OCI-LY7 (cell line): ENCODE measurements at regions of chr5 and their contacts with region 1.

Region 1: GRCh38 chr5:92353107-92354030 is 970.3 kb upstream of the ARRDC3 start:
- DNase-seq: no peak
- H3K4me3 ChIP-seq: no peak overlapping the region
- H3K27ac ChIP-seq: no peak overlapping the region
- H3K4me1 ChIP-seq: no peaks in the 10 kb centered on the region
- CTCF ChIP-seq: no peak

Region 2: DNA sequence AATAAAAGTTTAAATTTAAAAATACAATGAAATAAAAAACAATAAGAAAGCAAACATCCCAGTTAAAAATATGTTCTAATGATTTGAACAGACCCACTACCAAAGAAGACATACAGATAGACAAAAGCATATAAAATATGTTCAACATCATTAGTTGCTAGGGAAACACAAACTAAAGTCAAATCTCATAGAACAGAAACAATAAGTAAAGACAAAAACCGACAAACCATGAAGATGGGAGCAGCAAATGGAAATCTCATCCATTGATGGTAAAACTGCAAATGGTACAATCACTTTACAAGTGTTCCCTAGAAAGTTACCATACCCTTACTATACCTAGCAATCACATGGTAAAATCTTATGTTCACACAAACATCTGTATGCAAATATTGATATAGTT is 539.8 kb before region 1 on chr5:
- CTCF ChIA-PET with region 1: no interaction called
- POLR2A ChIA-PET with region 1: no interaction called
- intact Hi-C with region 1: no loop called
- DNase-seq: no peak
- H3K4me3 ChIP-seq: no peak overlapping the region
- H3K27ac ChIP-seq: no peak overlapping the region
- H3K4me1 ChIP-seq: no peaks in the 10 kb centered on the region
- CTCF ChIP-seq: no peak

Region 3: GRCh38 chr5:92838253-92838652 is 484.9 kb after region 1 on chr5:
- CTCF ChIA-PET with region 1: no interaction called
- POLR2A ChIA-PET with region 1: no interaction called
- intact Hi-C with region 1: loop called (anchors 5 kb)
- DNase-seq: no peak
- H3K4me3 ChIP-seq: no peak overlapping the region
- H3K27ac ChIP-seq: no peak overlapping the region
- H3K4me1 ChIP-seq: no peaks in the 10 kb centered on the region
- CTCF ChIP-seq: 0 out of 2 replicates have a peak, but pooled peaks have one; percentile 16

Region 4: GRCh38 chr5:92850886-92851285 is 497.5 kb after region 1 on chr5:
- CTCF ChIA-PET with region 1: no interaction called
- POLR2A ChIA-PET with region 1: no interaction called
- intact Hi-C with region 1: no loop called
- DNase-seq: no peak
- H3K4me3 ChIP-seq: no peak overlapping the region
- H3K27ac ChIP-seq: no peak overlapping the region
- H3K4me1 ChIP-seq: no peaks in the 10 kb centered on the region
- CTCF ChIP-seq: no peak